ENCODE measurements at regions of chr2 and their contacts with region 1.

Region 1: DNA sequence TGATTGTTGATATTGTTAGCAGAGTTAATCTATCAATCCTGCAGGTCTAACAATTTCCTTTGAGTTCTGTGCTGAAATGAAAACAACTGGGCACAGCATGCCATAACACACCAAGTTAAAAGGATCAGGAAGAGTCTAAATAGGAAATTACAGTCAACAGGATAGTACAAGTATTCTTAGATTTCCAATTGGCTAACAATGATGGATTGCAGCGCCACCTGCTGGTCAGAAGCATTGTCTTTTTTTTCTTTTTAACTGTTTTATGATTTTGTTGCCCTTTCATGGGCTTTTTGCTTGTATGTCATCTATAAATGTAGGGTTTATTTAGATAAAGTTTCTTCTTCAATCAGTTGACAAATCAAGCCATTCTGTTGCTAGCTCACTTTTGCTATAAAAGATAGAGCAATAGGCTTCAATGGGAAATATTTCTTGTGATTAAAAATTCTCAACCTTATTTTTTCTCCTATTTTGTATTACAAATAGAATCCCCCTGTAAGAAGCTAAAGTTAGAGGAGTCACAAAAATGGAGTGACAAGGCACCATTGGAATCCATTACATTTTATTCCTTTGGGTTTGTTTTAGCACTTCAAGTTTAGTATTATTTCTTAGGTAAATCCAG is 40.8 kb upstream of the RPRM start:
- DNase-seq: peak in 1 of 2 donors; percentile 47
- H3K4me3 ChIP-seq: no peak overlapping the region
- CTCF ChIP-seq: peak in 1 of 3 donors; percentile 63
- POLR2A ChIP-seq: no peak

Region 2: DNA sequence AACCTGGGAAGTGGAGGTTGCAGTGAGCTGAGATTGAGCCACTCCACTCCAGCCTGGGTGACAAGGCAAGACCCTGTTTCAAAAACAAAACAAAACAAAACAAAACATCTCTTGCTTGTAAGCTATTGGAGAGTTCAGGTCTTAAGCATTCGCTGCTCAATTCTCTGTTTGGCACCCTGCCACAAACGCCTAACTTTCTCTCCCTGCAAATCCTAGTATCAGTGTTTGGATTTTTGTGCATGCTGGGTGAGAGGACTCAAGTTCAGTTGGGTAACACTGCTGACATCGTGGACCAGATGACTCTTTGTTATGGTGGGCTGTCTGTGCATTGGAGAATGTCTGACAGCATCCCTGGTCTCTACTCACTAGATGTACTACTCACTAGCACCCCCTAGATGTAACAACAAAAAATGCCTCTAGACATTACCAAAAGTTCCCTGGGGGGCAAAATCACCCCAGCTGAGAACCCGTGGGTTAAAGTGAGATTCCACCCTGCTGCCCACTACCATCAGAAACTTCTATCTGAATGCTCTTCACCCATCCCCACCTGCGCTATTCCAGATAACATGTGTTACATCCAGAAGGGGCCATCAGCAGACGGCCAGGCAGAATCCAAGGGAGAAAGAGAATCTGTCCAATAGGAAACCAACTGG is 1471.4 kb before region 1 on chr2:
- intact Hi-C with region 1: loop called (anchors 10 kb)
- DNase-seq: no peak
- H3K4me3 ChIP-seq: no peak overlapping the region
- CTCF ChIP-seq: no peak
- POLR2A ChIP-seq: no peak